Heart right ventricle (tissue), 16 donors: ENCODE measurements at regions of chr1 and their contacts with region 1.

Region 1: GRCh38 chr1:236064674-236065508 is at the start of gene NID1:
- DNase-seq: peak; percentile 89 to 90
- ATAC-seq: peak; percentile 81 to 92 (median 86)
- H3K4me3 ChIP-seq: peak within 1 kb of the TSS; percentile 61 to 98 (median 88)
- H3K27ac ChIP-seq: peak within 1 kb of the TSS; percentile 89 to 100 (median 98)
- H3K4me1 ChIP-seq: peaks cover 4 to 75% (median 55%) of the 10 kb centered on the region in 9 donors
- H3K27me3 ChIP-seq: peaks cover 0 to 33% (median 0%) of the 10 kb centered on the region in 7 donors
- CTCF ChIP-seq: peak; percentile 13 to 72 (median 54)
- total RNA-seq, gene NID1: 33.5 to 120 (median 44.4) TPM

Region 2: DNA sequence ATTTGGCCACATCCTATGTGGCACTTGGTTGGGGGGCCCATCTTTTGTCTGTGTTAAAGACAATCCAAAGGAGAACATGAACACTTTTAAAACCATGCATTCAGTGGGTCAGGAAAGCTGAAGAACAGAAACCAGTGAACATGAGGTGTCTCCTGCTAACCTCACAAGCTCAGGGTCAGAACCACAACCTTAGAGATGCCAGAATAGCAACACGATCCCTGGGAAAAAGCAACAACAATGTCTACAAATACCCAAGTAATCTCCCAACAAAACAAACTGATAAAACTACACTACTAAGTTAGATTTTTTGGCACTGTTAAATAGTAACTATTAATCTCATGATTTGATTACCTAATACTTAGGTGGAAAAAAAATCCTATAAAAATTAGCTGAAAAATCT is 381.2 kb before region 1 on chr1:
- intact Hi-C with region 1: no loop called
- DNase-seq: no peak
- ATAC-seq: no peak
- H3K4me3 ChIP-seq: no peak overlapping the region
- H3K27ac ChIP-seq: no peak overlapping the region
- H3K4me1 ChIP-seq: no peaks in the 10 kb centered on the region
- H3K27me3 ChIP-seq: no peaks in the 10 kb centered on the region
- CTCF ChIP-seq: no peak

Region 3: DNA sequence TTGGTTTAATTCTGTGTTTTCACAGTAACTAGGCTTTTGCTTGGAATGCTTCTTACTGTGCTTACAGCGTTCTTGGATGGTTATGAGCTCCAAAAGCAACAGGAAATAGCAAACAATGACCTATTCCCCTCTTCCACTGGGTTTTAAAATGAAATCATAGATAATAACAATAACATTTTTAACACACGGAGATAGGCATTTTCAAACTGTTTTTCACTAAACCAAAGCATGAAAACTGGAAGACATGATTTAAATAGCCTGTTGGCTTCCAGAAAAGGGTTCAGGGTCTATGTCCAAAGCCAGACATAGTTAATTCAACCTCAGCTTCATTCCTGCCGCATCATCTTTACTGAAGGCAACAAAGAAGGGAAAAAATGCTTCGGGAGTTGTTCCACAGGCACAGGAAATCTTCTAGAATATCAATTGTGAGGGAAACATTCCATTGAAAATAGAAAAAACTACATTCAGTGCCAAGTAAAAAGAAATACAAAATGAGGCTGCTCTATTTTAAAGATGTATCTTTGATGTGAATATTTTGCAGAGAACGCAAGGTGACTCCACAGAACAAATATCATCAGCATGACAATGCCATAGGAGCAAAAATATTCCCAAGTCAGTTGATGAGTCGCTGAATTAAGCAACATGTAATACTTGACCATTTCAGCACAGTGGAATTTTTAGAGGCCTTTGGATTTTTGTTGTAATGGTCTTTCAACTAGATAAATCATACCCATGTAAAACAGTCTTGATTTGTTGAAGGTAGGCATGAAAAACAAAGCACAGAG is 80.7 kb before region 1 on chr1:
- intact Hi-C with region 1: loop called in 2 of 10 experiments (anchors 5 to 10 kb)
- DNase-seq: no peak
- ATAC-seq: peak in 7 of 8 donors; percentile 38 to 84 (median 73)
- H3K4me3 ChIP-seq: peak overlapping the region in 1 of 10 donors; percentile 12
- H3K27ac ChIP-seq: peak overlapping the region; percentile 12 to 87 (median 76)
- H3K4me1 ChIP-seq: peaks cover 0 to 71% (median 57%) of the 10 kb centered on the region in 9 donors
- H3K27me3 ChIP-seq: no peaks in the 10 kb centered on the region
- CTCF ChIP-seq: no peak

Region 4: DNA sequence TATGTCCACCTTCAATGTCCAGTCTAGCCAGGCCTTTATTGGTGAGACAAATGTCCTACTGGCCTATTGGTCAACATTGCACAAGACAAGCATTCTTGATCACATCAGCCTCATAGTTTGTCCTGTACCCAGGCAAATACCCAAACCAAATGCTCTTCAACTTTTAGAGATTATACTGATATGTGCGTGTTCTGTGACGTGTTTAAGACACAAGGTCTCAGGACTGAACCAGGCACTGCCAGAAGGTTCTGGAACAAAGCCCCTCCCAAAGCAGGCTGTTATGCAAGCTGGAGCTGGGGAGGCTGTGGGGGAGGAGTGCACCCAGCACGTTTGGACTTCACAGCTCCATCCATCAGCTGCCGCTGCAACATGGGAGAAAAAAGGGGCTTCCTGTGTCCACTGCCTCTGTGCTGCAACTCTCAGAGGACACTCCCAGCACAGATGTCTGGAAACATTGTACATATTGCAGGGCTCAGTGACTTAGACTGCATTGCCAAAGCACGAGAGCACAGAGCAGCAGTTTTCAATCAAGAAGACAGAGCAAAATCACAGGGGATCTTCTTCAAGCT is 45.9 kb before region 1 on chr1:
- intact Hi-C with region 1: loop called in 3 of 10 experiments (anchors 2 to 5 kb)
- DNase-seq: peak; percentile 77 to 86
- ATAC-seq: peak; percentile 82 to 90 (median 86)
- H3K4me3 ChIP-seq: no peak overlapping the region
- H3K27ac ChIP-seq: peak overlapping the region; percentile 63 to 87 (median 80)
- H3K4me1 ChIP-seq: peaks cover 4 to 69% (median 38%) of the 10 kb centered on the region in 9 donors
- H3K27me3 ChIP-seq: no peaks in the 10 kb centered on the region
- CTCF ChIP-seq: no peak

Region 5: DNA sequence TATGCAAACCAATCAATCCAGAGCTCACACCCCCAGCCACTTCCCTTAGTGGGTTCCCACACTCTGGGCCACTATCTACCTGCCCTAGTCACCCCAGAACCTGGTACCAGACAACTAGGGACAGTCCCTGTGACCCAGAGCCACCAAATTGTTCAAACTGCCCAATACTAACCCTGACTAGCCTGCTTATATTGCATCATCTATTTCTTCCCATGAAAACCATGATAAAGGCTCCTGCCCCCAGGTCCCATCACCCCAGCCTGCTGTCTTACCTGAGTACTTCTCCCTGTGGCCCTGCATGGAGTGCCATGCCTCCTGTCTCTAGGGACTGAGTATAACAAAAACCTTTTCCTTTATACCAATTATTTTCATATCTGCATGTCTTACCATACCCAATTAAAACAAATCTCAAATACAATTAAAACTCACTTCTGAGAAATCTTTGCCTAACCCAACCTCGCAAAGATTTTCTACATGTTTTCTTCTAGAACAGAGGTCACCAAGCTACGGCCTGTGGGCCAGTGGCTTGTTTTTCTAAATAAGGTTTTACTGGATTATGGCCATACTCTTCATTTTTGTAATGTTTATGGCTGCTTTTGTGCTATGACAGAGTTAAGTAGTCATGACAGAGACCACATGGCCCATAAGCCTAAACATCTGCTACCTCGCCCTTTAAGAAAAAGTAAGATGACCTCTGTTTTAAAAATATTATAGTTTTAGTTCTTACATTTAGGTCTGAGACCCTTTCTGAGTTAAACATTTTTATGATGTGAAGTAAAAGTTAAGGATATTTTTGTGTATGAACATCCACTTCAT is 31.0 kb after region 1 on chr1:
- intact Hi-C with region 1: loop called in 1 of 10 experiments (anchors 2 kb)
- DNase-seq: no peak
- ATAC-seq: no peak
- H3K4me3 ChIP-seq: no peak overlapping the region
- H3K27ac ChIP-seq: no peak overlapping the region
- H3K4me1 ChIP-seq: peaks cover 0 to 13% (median 0%) of the 10 kb centered on the region in 9 donors
- H3K27me3 ChIP-seq: no peaks in the 10 kb centered on the region
- CTCF ChIP-seq: no peak